Common myeloid progenitor, CD34-positive (primary cell): ENCODE measurements at regions of chr5 and their contacts with region 1.

Region 1: DNA sequence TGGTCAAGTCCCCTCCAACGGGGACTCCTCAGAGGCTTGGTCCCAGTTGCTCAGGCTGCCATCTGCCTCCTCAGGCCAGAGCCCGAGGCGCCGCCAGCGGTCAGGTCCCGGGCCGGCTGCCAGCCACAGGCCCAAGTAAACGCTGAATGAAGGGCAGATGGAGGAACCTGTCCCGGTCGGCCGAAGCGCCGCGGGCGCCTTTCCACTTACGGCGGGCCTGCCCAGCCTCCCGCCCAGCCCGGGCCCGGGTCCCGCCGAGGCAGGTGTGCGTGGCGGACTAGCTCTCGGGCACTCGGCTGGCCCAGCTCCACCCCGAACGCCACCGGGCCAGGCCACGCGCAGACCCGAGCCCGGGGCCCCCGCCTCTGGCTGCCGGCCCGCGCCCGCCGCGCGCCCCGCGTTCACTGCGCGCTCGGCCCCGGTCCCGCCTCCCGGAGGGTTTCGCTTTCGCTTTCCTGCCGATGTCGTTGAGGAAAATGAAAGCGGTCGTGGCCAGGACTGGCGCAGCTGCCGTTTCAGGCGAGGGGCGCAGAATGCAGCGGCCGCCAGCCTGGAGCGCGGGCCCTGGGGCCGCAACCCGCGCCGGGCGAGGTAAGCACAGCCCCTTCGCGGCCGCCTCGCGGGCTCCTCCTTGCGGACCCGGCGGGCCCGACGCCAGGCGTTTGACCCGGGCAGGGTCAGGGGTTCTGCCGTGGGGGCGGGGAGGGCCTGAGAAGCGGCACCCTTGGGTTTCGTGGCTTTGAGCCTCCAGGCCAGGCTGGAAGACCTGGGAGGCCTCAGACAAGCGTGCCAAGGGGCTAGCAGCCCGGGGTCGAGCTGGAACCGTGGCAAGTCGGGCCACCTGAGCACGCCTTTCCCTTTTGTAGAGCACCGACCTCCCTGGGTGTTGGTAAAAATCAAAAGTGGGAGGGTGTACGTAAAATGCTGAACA is 41.2 kb downstream of the SLC22A5 start:
- DNase-seq: peak; percentile 92 to 96 (median 95)
- H3K4me3 ChIP-seq: peak overlapping the region; percentile 45 to 90 (median 76)
- H3K27ac ChIP-seq: peak overlapping the region; percentile 92 to 96
- H3K4me1 ChIP-seq: peaks cover 29 to 72% (median 34%) of the 10 kb centered on the region in 4 experiments
- H3K27me3 ChIP-seq: no peaks in the 10 kb centered on the region

Region 2: DNA sequence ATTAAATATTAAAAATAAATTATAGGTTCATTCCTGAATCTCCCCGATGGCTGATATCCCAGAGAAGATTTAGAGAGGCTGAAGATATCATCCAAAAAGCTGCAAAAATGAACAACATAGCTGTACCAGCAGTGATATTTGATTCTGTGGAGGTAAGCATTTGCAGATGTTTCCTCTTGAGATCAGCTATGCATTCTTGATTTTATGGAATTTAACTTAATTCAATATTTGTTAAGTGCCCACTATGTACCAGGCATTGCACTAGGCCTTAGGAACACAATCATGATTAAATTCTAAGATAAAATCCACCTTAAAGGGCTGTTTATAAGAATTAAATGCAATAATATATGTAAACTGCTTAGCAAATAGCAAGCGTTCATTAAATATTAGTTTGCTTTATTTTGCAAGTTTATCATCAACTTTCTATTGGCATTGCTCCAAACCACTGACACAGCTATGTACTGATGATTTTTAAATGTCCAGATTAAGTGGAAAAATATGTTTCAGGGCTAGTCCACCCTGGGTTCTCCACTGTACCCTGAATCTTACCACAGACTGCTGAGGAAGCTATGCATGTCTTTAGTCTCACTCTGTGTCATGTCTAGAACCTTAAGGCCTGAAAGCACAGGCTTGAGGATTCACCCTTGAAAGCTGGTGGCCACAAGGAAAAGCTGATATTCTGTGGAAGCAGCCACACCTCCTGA is 83.3 kb before region 1 on chr5:
- CTCF ChIA-PET with region 1: no interaction called
- POLR2A ChIA-PET with region 1: no interaction called
- DNase-seq: no peak
- H3K4me3 ChIP-seq: no peak overlapping the region
- H3K27ac ChIP-seq: no peak overlapping the region
- H3K4me1 ChIP-seq: no peaks in the 10 kb centered on the region
- H3K27me3 ChIP-seq: no peaks in the 10 kb centered on the region

Region 3: DNA sequence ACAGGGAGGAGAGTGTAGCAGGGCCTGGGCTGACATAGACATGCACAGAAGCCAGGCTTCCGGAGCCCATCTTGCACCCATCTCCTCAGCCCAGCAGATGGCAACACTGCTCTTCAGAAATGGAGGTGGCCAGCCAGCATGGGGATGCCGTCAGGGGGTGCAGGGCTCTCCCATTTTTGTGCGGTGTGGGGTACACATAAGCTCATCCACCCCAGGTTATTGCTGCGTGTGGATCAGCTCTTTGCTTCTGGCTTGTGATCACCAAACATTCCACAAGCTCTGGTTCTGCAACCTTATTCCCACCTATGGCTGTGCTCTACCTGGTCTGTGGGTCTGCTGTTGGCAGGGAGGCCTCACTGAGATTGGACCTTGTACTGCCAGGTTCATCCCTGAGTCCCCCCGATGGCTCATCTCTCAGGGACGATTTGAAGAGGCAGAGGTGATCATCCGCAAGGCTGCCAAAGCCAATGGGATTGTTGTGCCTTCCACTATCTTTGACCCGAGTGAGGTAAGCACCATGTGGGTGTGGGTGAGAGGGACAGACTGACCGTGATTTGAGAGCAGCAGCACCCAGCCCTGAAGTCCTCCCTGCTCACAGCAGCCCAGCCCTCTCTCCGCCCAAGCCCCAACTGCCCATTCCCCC is 24.0 kb before region 1 on chr5:
- CTCF ChIA-PET with region 1: interaction called, 47 read pairs
- POLR2A ChIA-PET with region 1: interaction called, 4 read pairs
- DNase-seq: peak; percentile 74 to 89 (median 87)
- H3K4me3 ChIP-seq: no peak overlapping the region
- H3K27ac ChIP-seq: no peak overlapping the region
- H3K4me1 ChIP-seq: peaks cover 0 to 50% (median 31%) of the 10 kb centered on the region in 4 experiments
- H3K27me3 ChIP-seq: no peaks in the 10 kb centered on the region

Region 4: GRCh38 chr5:132456296-132457001 is 45.7 kb after region 1 on chr5:
- CTCF ChIA-PET with region 1: interaction called, 14 read pairs
- POLR2A ChIA-PET with region 1: interaction called, 5 read pairs
- DNase-seq: peak; percentile 78 to 97 (median 95)
- H3K4me3 ChIP-seq: peak overlapping the region in 6 of 7 experiments; percentile 4 to 49 (median 18)
- H3K27ac ChIP-seq: peak overlapping the region; percentile 89 to 91
- H3K4me1 ChIP-seq: peaks cover 48 to 85% (median 82%) of the 10 kb centered on the region in 4 experiments
- H3K27me3 ChIP-seq: no peaks in the 10 kb centered on the region

Region 5: GRCh38 chr5:132473019-132473531 is 62.4 kb after region 1 on chr5:
- CTCF ChIA-PET with region 1: interaction called, 50 read pairs
- POLR2A ChIA-PET with region 1: interaction called, 14 read pairs
- DNase-seq: peak; percentile 78 to 96 (median 91)
- H3K4me3 ChIP-seq: peak overlapping the region in 1 of 7 experiments; percentile 39
- H3K27ac ChIP-seq: no peak overlapping the region
- H3K4me1 ChIP-seq: peaks cover 10 to 80% (median 64%) of the 10 kb centered on the region in 4 experiments
- H3K27me3 ChIP-seq: no peaks in the 10 kb centered on the region

Region 6: GRCh38 chr5:132490486-132491367 is 80.0 kb after region 1 on chr5 and contains the start of gene IRF1:
- CTCF ChIA-PET with region 1: interaction called, 22 read pairs
- POLR2A ChIA-PET with region 1: interaction called, 9 read pairs
- DNase-seq: peak; percentile 95 to 98 (median 98)
- H3K4me3 ChIP-seq: peak within 1 kb of the TSS; percentile 81 to 98 (median 95)
- H3K27ac ChIP-seq: peak within 1 kb of the TSS; percentile 89 to 95
- H3K4me1 ChIP-seq: peaks cover 24 to 90% (median 79%) of the 10 kb centered on the region in 4 experiments
- H3K27me3 ChIP-seq: no peaks in the 10 kb centered on the region

Region 7: GRCh38 chr5:132506094-132506692 is 95.5 kb after region 1 on chr5:
- CTCF ChIA-PET with region 1: interaction called, 56 read pairs
- POLR2A ChIA-PET with region 1: no interaction called
- DNase-seq: peak; percentile 50 to 76 (median 76)
- H3K4me3 ChIP-seq: no peak overlapping the region
- H3K27ac ChIP-seq: no peak overlapping the region
- H3K4me1 ChIP-seq: peaks cover 0 to 14% (median 8%) of the 10 kb centered on the region in 4 experiments
- H3K27me3 ChIP-seq: no peaks in the 10 kb centered on the region